ENCODE measurements at regions of chr19 and their contacts with region 1.

Region 1: DNA sequence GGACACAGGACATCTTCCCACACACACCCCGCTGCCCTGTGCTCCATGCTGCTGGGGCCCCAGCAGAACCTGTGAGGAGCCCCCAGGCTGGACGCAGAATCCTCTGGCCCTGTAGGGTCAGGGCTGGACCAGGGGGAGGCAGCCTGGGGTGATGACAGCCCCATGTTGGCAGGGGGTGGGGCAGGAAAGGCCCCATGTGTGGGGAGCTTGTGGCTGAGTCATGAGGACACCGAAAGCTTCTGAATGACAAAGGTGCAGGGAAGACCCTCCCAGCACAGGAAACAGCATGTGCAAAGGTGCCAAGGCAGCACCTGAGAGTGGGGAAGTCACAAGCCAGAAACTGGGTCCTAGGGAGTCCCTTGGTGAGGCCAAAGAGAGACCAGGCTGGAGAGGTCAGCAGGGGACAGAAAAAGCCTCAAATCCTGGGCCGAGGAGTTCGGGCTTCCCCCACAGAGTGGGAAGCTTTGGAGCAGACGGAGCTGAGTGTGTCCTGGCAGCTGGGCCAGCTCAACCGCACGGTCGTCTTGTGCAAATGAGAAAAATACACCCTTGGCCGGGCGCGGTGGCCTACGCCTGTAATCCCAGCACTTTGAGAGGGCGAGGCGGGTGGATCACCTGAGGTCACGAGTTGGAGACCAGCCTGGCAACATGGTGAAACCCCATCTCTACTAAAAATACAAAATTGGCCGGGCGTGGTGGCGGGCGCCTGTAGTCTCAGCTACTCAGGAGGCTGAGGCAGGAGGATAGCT is 17.5 kb downstream of the ATP8B3 start:
- DNase-seq: peak in 1 of 5 donors; percentile 36
- H3K4me3 ChIP-seq: no peak overlapping the region
- H3K4me3 Mint-ChIP-seq: no peak overlapping the region
- H3K27ac ChIP-seq: no peak overlapping the region
- H3K27ac Mint-ChIP-seq: no peak overlapping the region
- H3K4me1 ChIP-seq: peaks cover 7% of the 10 kb centered on the region
- H3K4me1 Mint-ChIP-seq: peaks cover 0 to 6% (median 2%) of the 10 kb centered on the region in 4 donors
- H3K27me3 ChIP-seq: no peaks in the 10 kb centered on the region
- H3K27me3 Mint-ChIP-seq: peaks cover 0 to 4% of the 10 kb centered on the region in 2 donors

Region 2: GRCh38 chr19:1540365-1540925 is 254.2 kb before region 1 on chr19:
- CTCF ChIA-PET with region 1: interaction called, 15 read pairs
- POLR2A ChIA-PET with region 1: no interaction called
- intact Hi-C with region 1: no loop called
- DNase-seq: no peak
- H3K4me3 ChIP-seq: no peak overlapping the region
- H3K4me3 Mint-ChIP-seq: no peak overlapping the region
- H3K27ac ChIP-seq: no peak overlapping the region
- H3K27ac Mint-ChIP-seq: no peak overlapping the region
- H3K4me1 ChIP-seq: no peaks in the 10 kb centered on the region
- H3K4me1 Mint-ChIP-seq: no peaks in the 10 kb centered on the region
- H3K27me3 ChIP-seq: no peaks in the 10 kb centered on the region
- H3K27me3 Mint-ChIP-seq: peaks cover 14 to 18% of the 10 kb centered on the region in 2 donors

Region 3: DNA sequence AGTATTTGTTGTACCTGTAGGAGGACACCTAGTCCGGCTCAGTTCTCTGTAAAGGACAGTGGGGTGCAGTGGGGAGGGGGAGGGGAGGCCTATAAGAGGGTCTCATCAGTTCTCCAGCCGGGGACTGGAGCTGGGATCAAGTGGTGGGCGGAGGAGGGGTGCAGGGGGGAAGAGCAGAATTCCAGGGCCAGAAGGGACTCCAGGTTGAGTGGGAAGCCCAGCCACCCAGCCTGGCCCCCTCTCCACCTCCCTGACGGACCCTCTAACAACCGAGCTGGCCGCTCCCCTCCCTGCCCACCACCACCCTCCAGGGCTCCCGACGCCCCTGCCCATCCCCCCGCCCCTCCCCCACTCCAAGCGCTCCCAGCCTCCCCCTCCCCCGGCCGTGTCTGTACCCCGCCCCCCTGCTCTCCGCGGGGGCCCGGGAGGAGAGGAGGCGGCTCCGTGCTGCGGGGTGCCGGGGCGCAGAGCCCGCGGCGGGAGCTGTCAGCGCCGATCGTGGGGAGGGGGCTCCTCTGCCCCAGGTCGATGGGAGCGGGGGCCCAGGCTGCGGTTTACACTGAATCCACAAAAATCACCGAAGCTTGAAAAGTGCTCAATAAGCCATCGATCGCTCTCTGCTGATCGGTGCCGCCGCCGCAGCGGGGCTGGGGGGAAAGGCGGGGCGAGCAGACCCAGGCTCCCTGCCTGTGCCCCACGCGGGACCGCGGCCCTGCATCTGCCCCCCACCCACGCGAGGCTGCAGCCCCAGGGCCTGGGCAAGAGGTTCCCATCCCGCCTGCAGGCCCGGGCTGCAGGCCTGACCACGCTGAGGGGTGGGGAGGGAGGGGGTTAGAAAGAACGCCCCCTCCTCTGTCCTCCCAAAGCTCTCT is 75.9 kb before region 1 on chr19:
- CTCF ChIA-PET with region 1: no interaction called
- POLR2A ChIA-PET with region 1: no interaction called
- intact Hi-C with region 1: no loop called
- DNase-seq: no peak
- H3K4me3 ChIP-seq: no peak overlapping the region
- H3K4me3 Mint-ChIP-seq: no peak overlapping the region
- H3K27ac ChIP-seq: no peak overlapping the region
- H3K27ac Mint-ChIP-seq: no peak overlapping the region
- H3K4me1 ChIP-seq: no peaks in the 10 kb centered on the region
- H3K4me1 Mint-ChIP-seq: peaks cover 0 to 6% (median under 1%) of the 10 kb centered on the region in 4 donors
- H3K27me3 ChIP-seq: peaks cover 10% of the 10 kb centered on the region
- H3K27me3 Mint-ChIP-seq: peaks cover 41 to 49% of the 10 kb centered on the region in 2 donors

Region 4: DNA sequence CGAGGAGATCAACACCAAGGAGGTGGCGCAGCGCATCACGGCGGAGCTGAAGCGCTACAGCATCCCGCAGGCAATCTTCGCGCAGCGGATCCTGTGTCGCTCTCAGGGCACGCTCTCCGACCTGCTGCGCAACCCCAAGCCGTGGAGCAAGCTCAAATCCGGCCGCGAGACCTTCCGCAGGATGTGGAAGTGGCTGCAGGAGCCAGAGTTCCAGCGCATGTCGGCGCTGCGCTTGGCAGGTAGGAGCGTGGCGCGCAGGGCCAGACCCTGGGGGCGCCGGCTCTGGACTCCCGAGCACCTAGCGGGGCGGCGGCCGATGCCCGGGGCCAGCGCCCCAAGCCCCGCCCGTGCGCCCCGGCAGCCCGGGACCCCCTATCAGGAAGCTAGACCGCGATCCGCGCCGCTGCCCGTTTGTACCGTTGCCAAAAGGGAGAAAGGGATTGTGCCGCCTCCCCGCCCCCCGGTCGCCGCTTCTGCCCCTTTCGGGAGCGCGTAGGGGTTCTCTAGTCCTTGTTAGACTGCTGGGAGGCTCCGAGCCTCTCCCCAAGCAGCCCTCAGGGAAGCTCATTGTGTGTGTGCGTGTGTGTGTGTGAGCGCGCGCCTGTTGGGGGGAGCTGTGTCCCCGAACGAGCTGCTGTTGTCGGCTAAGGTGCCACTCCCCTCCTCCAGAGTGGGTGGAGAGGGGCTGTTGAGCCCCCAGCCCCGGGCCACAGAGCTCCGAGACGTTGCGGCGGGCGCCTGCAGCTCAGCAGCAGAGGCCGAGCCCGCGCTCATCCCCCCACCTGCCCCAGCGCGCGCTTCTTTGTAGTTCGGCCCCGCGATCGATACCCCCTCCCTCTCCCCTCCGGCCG is 39.8 kb before region 1 on chr19:
- CTCF ChIA-PET with region 1: no interaction called
- POLR2A ChIA-PET with region 1: no interaction called
- intact Hi-C with region 1: no loop called
- DNase-seq: peak in 1 of 5 donors; percentile 19
- H3K4me3 ChIP-seq: no peak overlapping the region
- H3K4me3 Mint-ChIP-seq: peak overlapping the region in 3 of 8 donors; percentile 8 to 29 (median 8)
- H3K27ac ChIP-seq: no peak overlapping the region
- H3K27ac Mint-ChIP-seq: peak overlapping the region in 1 of 7 donors; percentile 60
- H3K4me1 ChIP-seq: peaks cover 15% of the 10 kb centered on the region
- H3K4me1 Mint-ChIP-seq: peaks cover 7 to 26% (median 9%) of the 10 kb centered on the region in 4 donors
- H3K27me3 ChIP-seq: peaks cover 66% of the 10 kb centered on the region
- H3K27me3 Mint-ChIP-seq: peaks cover 31 to 33% of the 10 kb centered on the region in 2 donors

Region 5: GRCh38 chr19:1780272-1780958 is 14.2 kb before region 1 on chr19:
- CTCF ChIA-PET with region 1: interaction called, 15 read pairs
- POLR2A ChIA-PET with region 1: no interaction called
- intact Hi-C with region 1: no loop called
- DNase-seq: peak in 1 of 5 donors; percentile 36
- H3K4me3 ChIP-seq: no peak overlapping the region
- H3K4me3 Mint-ChIP-seq: no peak overlapping the region
- H3K27ac ChIP-seq: no peak overlapping the region
- H3K27ac Mint-ChIP-seq: no peak overlapping the region
- H3K4me1 ChIP-seq: no peaks in the 10 kb centered on the region
- H3K4me1 Mint-ChIP-seq: peaks cover 0 to 6% (median under 1%) of the 10 kb centered on the region in 4 donors
- H3K27me3 ChIP-seq: peaks cover 28% of the 10 kb centered on the region
- H3K27me3 Mint-ChIP-seq: peaks cover 36 to 56% of the 10 kb centered on the region in 2 donors

Region 6: GRCh38 chr19:1945899-1946298 is 151.3 kb after region 1 on chr19:
- CTCF ChIA-PET with region 1: no interaction called
- POLR2A ChIA-PET with region 1: no interaction called
- intact Hi-C with region 1: no loop called
- DNase-seq: peak in 1 of 5 donors; percentile 31
- H3K4me3 ChIP-seq: no peak overlapping the region
- H3K4me3 Mint-ChIP-seq: peak overlapping the region in 4 of 8 donors; percentile 17 to 73 (median 46)
- H3K27ac ChIP-seq: no peak overlapping the region
- H3K27ac Mint-ChIP-seq: peak overlapping the region; percentile 48 to 83 (median 68)
- H3K4me1 ChIP-seq: peaks cover 43% of the 10 kb centered on the region
- H3K4me1 Mint-ChIP-seq: peaks cover 16 to 64% (median 38%) of the 10 kb centered on the region in 4 donors
- H3K27me3 ChIP-seq: no peaks in the 10 kb centered on the region
- H3K27me3 Mint-ChIP-seq: no peaks in the 10 kb centered on the region